ENCODE measurements at regions of chr14 and their contacts with region 1.

Region 1: DNA sequence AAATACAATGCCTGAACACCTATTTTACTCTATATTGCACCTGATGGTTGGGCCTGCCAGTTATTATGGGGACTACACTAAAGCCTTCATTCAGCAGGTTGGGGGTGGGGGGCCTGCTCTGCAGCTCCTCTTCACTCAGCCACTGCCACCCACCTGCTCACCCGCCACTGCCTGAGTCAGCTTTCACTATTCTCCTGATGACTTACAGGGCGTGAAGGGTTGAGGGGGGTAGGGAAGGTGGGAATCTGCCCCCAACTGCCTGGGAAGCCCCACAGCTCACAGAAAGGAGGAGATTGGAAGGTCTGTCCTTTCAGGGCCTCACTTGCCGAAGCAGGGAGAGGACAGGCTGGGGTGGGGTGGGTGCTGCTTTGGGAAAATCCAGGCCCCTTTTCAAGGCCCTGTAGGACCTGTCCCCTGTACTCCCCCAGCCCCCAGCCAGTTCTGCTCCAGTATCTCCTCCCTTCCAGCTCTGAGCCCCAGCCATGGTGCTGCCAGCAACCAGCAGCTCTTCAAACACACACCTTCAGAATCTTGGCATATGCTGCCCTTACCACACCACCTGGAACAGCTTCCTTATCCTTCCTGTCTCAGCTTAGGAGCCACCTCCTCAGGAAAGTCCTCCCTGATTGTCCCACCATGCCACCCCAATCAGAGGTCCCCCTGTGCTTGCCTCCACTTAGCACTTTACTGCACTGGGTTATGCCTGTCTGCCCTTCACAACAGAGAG is 33.1 kb downstream of the IRF2BPL start:
- DNase-seq: no peak
- H3K4me3 Mint-ChIP-seq: no peak overlapping the region
- H3K27ac Mint-ChIP-seq: no peak overlapping the region
- H3K4me1 Mint-ChIP-seq: peaks cover 16% of the 10 kb centered on the region
- H3K27me3 Mint-ChIP-seq: no peaks in the 10 kb centered on the region

Region 2: GRCh38 chr14:76937181-76938091 is 58.0 kb before region 1 on chr14:
- intact Hi-C with region 1: no loop called
- DNase-seq: no peak
- H3K4me3 Mint-ChIP-seq: no peak overlapping the region
- H3K27ac Mint-ChIP-seq: no peak overlapping the region
- H3K4me1 Mint-ChIP-seq: peaks cover 14% of the 10 kb centered on the region
- H3K27me3 Mint-ChIP-seq: no peaks in the 10 kb centered on the region

Region 3: DNA sequence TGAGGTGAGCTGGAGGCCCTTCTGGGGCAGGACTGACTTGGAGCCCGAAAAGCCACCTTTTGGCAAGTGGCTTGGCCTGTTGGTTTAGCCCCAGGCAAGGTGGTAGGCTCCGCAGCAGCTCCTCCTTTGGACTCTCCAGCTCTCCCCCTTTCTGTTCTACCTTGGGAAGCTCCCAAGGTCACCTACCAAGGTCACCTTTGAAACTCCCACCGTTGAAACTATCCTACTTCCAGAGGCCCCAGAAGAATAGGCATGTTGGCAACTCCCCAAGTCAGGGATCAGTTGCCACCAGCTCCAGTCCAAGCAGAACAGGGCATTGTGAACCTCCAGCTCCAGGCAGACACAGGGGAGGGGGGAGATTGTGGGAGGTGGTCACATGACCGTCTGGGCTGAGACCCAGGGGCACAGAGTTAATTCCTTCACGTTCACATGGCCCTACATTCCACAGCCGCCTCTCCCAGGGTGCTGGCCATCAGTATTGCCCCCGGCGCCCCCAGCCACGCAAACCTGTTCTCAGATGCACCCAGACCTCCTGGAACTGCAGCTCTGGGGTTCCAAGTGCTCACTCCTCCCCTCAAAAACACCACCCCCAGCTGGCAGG is 18.7 kb after region 1 on chr14:
- intact Hi-C with region 1: loop called (anchors 1 kb)
- DNase-seq: no peak
- H3K4me3 Mint-ChIP-seq: no peak overlapping the region
- H3K27ac Mint-ChIP-seq: no peak overlapping the region
- H3K4me1 Mint-ChIP-seq: peaks cover 6% of the 10 kb centered on the region
- H3K27me3 Mint-ChIP-seq: no peaks in the 10 kb centered on the region

Measured in activated CD4-positive, alpha-beta T cell treated with anti-CD3 and anti-CD28 coated beads, Interleukin-2, amount 10 ng/mL, durations not matched to agents 24 days and 14 days (primary cell).